ENCODE measurements at regions of chr12 and their contacts with region 1.

Region 1: GRCh38 chr12:10673660-10674384 is at the start of gene STYK1:
- DNase-seq: peak; percentile 56 to 75 (median 60)
- H3K4me3 ChIP-seq: peak within 1 kb of the TSS in 1 of 2 donors; percentile 27
- H3K4me3 Mint-ChIP-seq: peak within 1 kb of the TSS; percentile 78 to 91 (median 85)
- H3K27ac ChIP-seq: no peak within 1 kb of the TSS
- H3K27ac Mint-ChIP-seq: peak within 1 kb of the TSS; percentile 15 to 85 (median 58)
- H3K4me1 ChIP-seq: peaks cover 29% of the 10 kb centered on the region
- H3K4me1 Mint-ChIP-seq: peaks cover 20 to 41% (median 28%) of the 10 kb centered on the region in 4 donors
- H3K27me3 ChIP-seq: no peaks in the 10 kb centered on the region
- H3K27me3 Mint-ChIP-seq: peaks cover 17% of the 10 kb centered on the region in 2 donors
- total RNA-seq, gene STYK1: not detected

Region 2: DNA sequence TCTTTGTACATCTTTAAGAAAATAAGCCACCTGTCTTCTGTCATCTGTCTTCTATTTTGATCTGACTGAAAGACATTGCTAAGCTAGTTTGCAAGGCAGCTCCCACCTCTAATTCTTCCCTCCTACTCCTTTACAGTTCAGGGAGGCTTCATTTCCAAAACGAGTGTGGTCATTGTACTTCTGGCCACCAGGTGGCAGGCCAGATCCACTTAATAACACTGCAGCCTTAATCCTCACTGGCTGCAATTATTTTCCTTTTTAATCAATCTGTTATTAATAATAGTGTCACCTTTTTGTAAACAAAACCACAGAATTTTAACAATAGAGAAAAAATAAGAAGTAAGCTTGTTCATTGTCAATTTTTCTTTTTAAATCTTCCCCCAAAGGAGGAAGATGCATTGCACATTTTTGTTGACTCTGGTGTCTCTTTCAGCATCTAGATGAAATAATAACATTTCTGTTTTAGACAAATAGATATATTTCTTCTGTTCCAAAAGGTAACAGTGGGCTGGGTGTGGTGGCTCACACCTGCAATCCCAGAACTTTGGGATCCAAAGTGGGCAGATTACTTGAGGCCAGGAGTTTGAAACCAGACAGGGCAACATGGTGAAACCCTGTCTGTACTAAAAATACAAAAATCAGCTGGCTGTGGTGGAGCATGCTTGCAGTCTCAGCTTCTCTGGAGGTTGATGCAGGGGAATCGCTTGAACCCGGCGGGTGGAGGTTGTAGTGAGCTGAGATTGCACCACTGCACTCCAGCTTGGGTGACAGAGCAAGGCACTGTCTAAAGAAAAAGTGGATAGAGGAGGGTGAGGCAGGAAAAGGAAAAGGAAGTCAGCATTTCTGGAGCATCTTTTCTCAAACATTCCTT is 437.8 kb before region 1 on chr12:
- CTCF ChIA-PET with region 1: interaction called, 13 read pairs
- POLR2A ChIA-PET with region 1: no interaction called
- intact Hi-C with region 1: loop called (anchors 1 kb)
- DNase-seq: peak in 4 of 5 donors; percentile 30 to 43 (median 38)
- H3K4me3 ChIP-seq: no peak overlapping the region
- H3K4me3 Mint-ChIP-seq: no peak overlapping the region
- H3K27ac ChIP-seq: no peak overlapping the region
- H3K27ac Mint-ChIP-seq: no peak overlapping the region
- H3K4me1 ChIP-seq: no peaks in the 10 kb centered on the region
- H3K4me1 Mint-ChIP-seq: peaks cover 0 to 2% (median 0%) of the 10 kb centered on the region in 4 donors
- H3K27me3 ChIP-seq: no peaks in the 10 kb centered on the region
- H3K27me3 Mint-ChIP-seq: peaks cover 0 to 1% of the 10 kb centered on the region in 2 donors

Region 3: DNA sequence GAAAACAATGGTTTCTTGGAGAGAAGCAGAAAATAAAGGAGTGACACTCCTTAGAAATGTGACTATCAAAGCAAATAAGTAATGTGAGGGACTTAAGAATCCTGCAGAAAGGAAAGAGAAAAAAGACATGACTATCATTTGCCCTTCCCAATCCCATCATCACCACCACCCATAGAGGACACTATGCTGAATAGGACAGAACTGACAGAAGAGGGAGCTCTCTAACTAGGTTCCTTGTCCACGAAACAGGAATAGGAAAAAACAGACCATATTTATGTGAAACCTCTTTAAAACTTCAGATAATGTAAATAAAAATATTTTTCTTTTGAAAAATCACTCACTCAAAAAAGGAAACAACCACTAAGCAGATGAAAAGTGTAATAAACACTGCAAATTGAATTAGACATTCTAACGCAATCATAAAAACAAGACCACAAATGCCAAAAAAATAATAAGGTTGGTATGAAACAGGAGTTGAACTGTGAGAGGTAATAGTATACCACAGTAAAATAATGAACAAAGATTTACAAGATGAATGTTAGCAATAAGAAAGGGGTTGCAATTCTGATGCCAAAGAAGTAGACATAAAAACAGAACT is 342.1 kb before region 1 on chr12:
- CTCF ChIA-PET with region 1: no interaction called
- POLR2A ChIA-PET with region 1: no interaction called
- intact Hi-C with region 1: loop called (anchors 1 kb)
- DNase-seq: peak in 4 of 5 donors; percentile 14 to 20 (median 18)
- H3K4me3 ChIP-seq: no peak overlapping the region
- H3K4me3 Mint-ChIP-seq: no peak overlapping the region
- H3K27ac ChIP-seq: no peak overlapping the region
- H3K27ac Mint-ChIP-seq: no peak overlapping the region
- H3K4me1 ChIP-seq: no peaks in the 10 kb centered on the region
- H3K4me1 Mint-ChIP-seq: no peaks in the 10 kb centered on the region
- H3K27me3 ChIP-seq: no peaks in the 10 kb centered on the region
- H3K27me3 Mint-ChIP-seq: peaks cover 0 to 4% of the 10 kb centered on the region in 2 donors

Region 4: GRCh38 chr12:10562306-10562933 is 111.4 kb before region 1 on chr12:
- CTCF ChIA-PET with region 1: interaction called, 3 read pairs
- POLR2A ChIA-PET with region 1: no interaction called
- intact Hi-C with region 1: loop called (anchors 1 kb)
- DNase-seq: peak in 4 of 5 donors; percentile 31 to 45 (median 38)
- H3K4me3 ChIP-seq: no peak overlapping the region
- H3K4me3 Mint-ChIP-seq: no peak overlapping the region
- H3K27ac ChIP-seq: no peak overlapping the region
- H3K27ac Mint-ChIP-seq: no peak overlapping the region
- H3K4me1 ChIP-seq: no peaks in the 10 kb centered on the region
- H3K4me1 Mint-ChIP-seq: no peaks in the 10 kb centered on the region
- H3K27me3 ChIP-seq: no peaks in the 10 kb centered on the region
- H3K27me3 Mint-ChIP-seq: peaks cover 11 to 24% of the 10 kb centered on the region in 2 donors

Region 5: DNA sequence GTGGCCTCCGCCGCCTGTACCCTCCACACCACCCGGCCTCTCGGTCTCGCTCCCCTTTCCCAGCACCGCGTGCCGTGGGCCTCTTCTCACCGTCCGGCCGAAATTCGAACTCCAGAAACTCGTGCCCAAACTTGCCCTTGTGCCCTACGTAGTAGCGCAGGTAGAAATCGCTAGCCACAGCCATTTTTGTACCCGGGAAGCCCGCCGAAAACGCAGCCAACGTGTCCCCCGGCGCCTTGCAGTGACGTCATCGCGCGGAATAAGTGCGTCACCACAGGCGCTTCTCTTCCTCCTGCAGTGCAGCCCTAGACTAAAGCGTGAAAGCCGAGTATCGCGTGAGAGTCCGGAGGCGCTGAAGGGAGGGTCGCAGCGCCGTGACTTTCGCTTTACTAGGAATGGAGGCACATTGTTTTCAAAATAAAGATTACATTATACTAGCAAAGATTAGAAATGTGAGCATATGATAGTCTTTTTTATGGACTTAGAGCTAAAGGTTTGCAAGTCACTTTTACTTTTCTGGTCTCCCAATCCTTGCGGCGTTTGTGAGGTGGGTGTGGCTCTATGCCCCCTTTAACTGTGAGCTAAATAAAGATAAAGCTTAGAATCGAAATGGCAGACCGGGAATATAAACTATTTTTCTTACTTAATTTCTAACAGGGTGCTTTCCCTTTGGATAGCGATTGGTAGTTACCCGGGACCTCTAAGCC is 60.3 kb before region 1 on chr12 and contains the start of gene MAGOHB:
- CTCF ChIA-PET with region 1: no interaction called
- POLR2A ChIA-PET with region 1: no interaction called
- intact Hi-C with region 1: loop called (anchors 2 kb)
- DNase-seq: peak; percentile 96 to 98 (median 96)
- H3K4me3 ChIP-seq: peak within 1 kb of the TSS; percentile 92 to 96
- H3K4me3 Mint-ChIP-seq: peak within 1 kb of the TSS; percentile 99 to 100 (median 100)
- H3K27ac ChIP-seq: peak within 1 kb of the TSS; percentile 93
- H3K27ac Mint-ChIP-seq: peak within 1 kb of the TSS; percentile 99 to 100 (median 100)
- H3K4me1 ChIP-seq: peaks cover 22% of the 10 kb centered on the region
- H3K4me1 Mint-ChIP-seq: peaks cover 20 to 36% (median 27%) of the 10 kb centered on the region in 4 donors
- H3K27me3 ChIP-seq: no peaks in the 10 kb centered on the region
- H3K27me3 Mint-ChIP-seq: peaks cover 5 to 10% of the 10 kb centered on the region in 2 donors
- total RNA-seq, gene MAGOHB: 19.3 to 22.0 TPM

Region 6: GRCh38 chr12:10807186-10807585 is 133.4 kb after region 1 on chr12 and contains the start of gene TAS2R8:
- CTCF ChIA-PET with region 1: no interaction called
- POLR2A ChIA-PET with region 1: no interaction called
- intact Hi-C with region 1: no loop called
- DNase-seq: no peak
- H3K4me3 ChIP-seq: no peak within 1 kb of the TSS
- H3K4me3 Mint-ChIP-seq: no peak within 1 kb of the TSS
- H3K27ac ChIP-seq: no peak within 1 kb of the TSS
- H3K27ac Mint-ChIP-seq: no peak within 1 kb of the TSS
- H3K4me1 ChIP-seq: no peaks in the 10 kb centered on the region
- H3K4me1 Mint-ChIP-seq: no peaks in the 10 kb centered on the region
- H3K27me3 ChIP-seq: no peaks in the 10 kb centered on the region
- H3K27me3 Mint-ChIP-seq: peaks cover 19 to 21% of the 10 kb centered on the region in 2 donors
- total RNA-seq, gene TAS2R8: not detected